ENCODE measurements at regions of chr6 and their contacts with region 1.

Region 1: DNA sequence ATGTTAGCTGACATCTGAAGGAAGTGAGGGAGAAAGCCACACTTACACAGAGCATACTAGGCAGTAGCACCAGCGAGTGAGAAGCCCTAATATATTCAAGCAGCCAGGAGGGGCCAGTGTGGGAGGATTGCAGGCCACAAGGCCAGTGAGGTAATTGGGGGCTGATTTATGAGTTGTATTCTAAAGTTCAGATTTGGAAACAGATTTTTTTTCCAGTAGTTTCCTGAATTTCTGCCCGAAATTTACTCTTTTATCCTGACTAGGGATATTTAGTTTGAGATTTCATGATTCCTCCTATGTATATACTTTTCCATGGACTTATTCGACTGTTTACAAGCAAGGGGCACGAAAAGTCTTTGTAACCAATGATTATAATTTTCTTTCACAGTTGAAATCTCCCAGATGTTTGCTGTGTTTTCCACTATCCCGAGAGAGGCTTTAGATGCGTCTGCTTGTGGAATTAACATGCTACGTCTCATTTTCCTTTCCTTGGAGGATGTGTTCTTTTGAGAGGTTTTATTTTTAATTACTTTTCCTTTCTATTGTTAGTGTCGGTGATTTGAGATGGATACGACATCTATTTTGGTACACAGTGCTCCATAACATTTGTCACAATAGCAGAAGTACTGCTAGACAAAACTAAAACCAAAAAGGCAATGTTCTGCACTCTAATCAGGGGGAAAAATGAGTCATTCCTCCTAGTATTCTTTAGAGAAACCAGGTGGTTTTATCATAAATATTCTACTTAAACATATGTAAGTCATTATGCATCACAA is 356.3 kb upstream of the HSF2 start:
- DNase-seq: peak in 1 of 5 donors; percentile 22
- ATAC-seq: peak in 3 of 4 donors; percentile 73 to 86 (median 78)
- H3K4me3 ChIP-seq: peak overlapping the region in 4 of 12 donors; percentile 1 to 24 (median 4)
- H3K27ac ChIP-seq: peak overlapping the region; percentile 10 to 79 (median 44)
- H3K4me1 ChIP-seq: peaks cover 0 to 17% (median 3%) of the 10 kb centered on the region in 12 donors
- H3K27me3 ChIP-seq: no peaks in the 10 kb centered on the region
- CTCF ChIP-seq: peak in 1 of 12 donors; percentile 12
- POLR2A ChIP-seq: no peak

Region 2: DNA sequence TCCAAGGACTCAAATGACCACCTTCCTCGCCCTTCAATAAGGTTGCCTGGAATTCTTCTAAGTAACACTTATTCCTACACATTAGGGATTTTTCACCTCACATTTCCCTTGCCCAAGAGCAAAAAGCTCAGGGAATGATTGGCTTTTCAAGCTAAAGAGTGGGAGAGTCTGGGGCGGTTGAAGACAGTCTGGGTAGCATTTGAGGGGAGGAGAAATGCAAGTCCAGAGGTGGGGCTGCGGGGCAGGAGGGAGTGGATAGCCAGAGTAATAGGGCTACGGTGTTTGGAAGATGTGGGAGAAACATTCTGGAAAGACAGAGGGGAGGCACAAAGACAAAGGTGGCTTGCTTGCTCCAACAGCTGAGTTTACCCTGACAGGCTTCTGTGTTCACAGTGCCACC is 10.0 kb after region 1 on chr6:
- intact Hi-C with region 1: no loop called
- DNase-seq: no peak
- ATAC-seq: no peak
- H3K4me3 ChIP-seq: no peak overlapping the region
- H3K27ac ChIP-seq: no peak overlapping the region
- H3K4me1 ChIP-seq: no peaks in the 10 kb centered on the region
- H3K27me3 ChIP-seq: no peaks in the 10 kb centered on the region
- CTCF ChIP-seq: no peak
- POLR2A ChIP-seq: no peak

Region 3: GRCh38 chr6:122184401-122184827 is 141.3 kb after region 1 on chr6:
- intact Hi-C with region 1: loop called in 5 of 10 experiments (anchors 5 to 10 kb)
- DNase-seq: no peak
- ATAC-seq: peak; percentile 51 to 83 (median 74)
- H3K4me3 ChIP-seq: peak overlapping the region in 7 of 12 donors; percentile 22 to 43 (median 34)
- H3K27ac ChIP-seq: no peak overlapping the region
- H3K4me1 ChIP-seq: peaks cover 0 to 10% (median 0%) of the 10 kb centered on the region in 12 donors
- H3K27me3 ChIP-seq: no peaks in the 10 kb centered on the region
- CTCF ChIP-seq: peak; percentile 16 to 61 (median 49)
- POLR2A ChIP-seq: no peak

Region 4: DNA sequence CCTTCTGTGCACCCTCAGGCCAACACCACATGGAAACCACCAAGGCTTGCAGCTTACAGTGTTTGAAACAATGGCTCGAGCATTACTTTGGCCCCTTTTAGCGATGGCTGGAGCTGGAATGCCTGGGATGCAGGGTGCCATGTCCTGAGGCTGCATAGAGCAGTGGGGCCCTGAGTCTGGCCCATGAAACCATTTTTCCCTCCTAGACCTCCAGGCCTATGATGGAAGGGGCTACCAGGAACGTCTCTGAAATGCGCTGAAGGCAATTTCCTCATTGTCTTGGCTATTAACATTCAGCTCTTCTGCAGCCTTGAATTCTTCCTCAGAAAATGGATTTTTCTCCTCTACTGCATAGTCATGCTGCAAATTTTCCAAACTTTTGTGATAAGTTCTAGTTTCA is 458.3 kb after region 1 on chr6:
- intact Hi-C with region 1: no loop called
- DNase-seq: no peak
- ATAC-seq: no peak
- H3K4me3 ChIP-seq: no peak overlapping the region
- H3K27ac ChIP-seq: no peak overlapping the region
- H3K4me1 ChIP-seq: no peaks in the 10 kb centered on the region
- H3K27me3 ChIP-seq: no peaks in the 10 kb centered on the region
- CTCF ChIP-seq: no peak
- POLR2A ChIP-seq: no peak